Dorsolateral prefrontal cortex (tissue), 120 donors: ENCODE measurements at regions of chr2 and their contacts with region 1.

Region 1: GRCh38 chr2:193011870-193012269 is 817.1 kb upstream of the TMEFF2 start:
- DNase-seq: no peak
- H3K4me3 ChIP-seq: no peak overlapping the region
- H3K27ac ChIP-seq: no peak overlapping the region
- H3K27me3 ChIP-seq: no peaks in the 10 kb centered on the region
- CTCF ChIP-seq: no peak

Region 2: DNA sequence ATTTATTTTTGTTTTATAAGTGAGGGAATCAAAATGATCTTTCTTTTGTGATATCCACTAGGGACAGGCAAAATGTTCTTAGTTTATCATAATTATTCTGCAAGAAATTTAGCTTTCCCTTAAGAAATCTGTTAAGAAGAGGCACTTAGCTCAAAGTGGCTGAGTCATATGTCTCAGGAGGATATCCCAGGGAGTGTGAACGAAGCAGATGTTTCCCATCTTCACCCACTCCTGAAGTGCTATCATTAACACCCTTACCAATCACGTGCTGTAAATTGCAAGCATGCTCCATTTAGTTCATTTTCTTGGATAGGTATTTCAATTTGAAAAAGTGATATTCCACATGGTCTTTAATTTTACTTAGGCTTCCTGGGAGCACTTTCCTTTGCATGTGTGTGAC is 42.8 kb before region 1 on chr2:
- intact Hi-C with region 1: loop called in 1 of 2 experiments (anchors 10 kb)
- DNase-seq: no peak
- H3K4me3 ChIP-seq: no peak overlapping the region
- H3K27ac ChIP-seq: no peak overlapping the region
- H3K27me3 ChIP-seq: peaks cover 0 to 3% (median 0%) of the 10 kb centered on the region in 45 donors
- CTCF ChIP-seq: no peak

Region 3: GRCh38 chr2:193124815-193125214 is 112.9 kb after region 1 on chr2:
- intact Hi-C with region 1: no loop called
- DNase-seq: no peak
- H3K4me3 ChIP-seq: no peak overlapping the region
- H3K27ac ChIP-seq: no peak overlapping the region
- H3K27me3 ChIP-seq: no peaks in the 10 kb centered on the region
- CTCF ChIP-seq: no peak